ENCODE measurements at regions of chr17 and their contacts with region 1.

Region 1: GRCh38 chr17:6775871-6776405 is at the start of gene FBXO39:
- DNase-seq: no peak
- total RNA-seq, gene FBXO39: 0.67 TPM in 1 of 2 donors, not detected in the other

Region 2: GRCh38 chr17:7775051-7775450 is 999.1 kb after region 1 on chr17:
- intact Hi-C with region 1: loop called in 1 of 2 experiments (anchors 5 kb)
- DNase-seq: peak; percentile 74

Measured in posterior vena cava (tissue), 2 donors.